Right lobe of liver (tissue), 6 donors: ENCODE measurements at regions of chr10 and their contacts with region 1.

Region 1: GRCh38 chr10:58064714-58065528 is 202.8 kb downstream of the IPMK start:
- DNase-seq: no peak
- ATAC-seq: peak; percentile 81 to 88 (median 86)
- H3K4me3 ChIP-seq: no peak overlapping the region
- H3K27ac ChIP-seq: no peak overlapping the region
- H3K4me1 ChIP-seq: no peaks in the 10 kb centered on the region
- H3K27me3 ChIP-seq: no peaks in the 10 kb centered on the region
- CTCF ChIP-seq: peak; percentile 63 to 88 (median 78)
- POLR2A ChIP-seq: no peak

Region 2: GRCh38 chr10:57341294-57341693 is 723.6 kb before region 1 on chr10:
- intact Hi-C with region 1: loop called in 1 of 2 experiments (anchors 10 kb)
- DNase-seq: no peak
- ATAC-seq: no peak
- H3K4me3 ChIP-seq: no peak overlapping the region
- H3K27ac ChIP-seq: no peak overlapping the region
- H3K4me1 ChIP-seq: no peaks in the 10 kb centered on the region
- H3K27me3 ChIP-seq: no peaks in the 10 kb centered on the region
- CTCF ChIP-seq: no peak
- POLR2A ChIP-seq: no peak

Region 3: GRCh38 chr10:57716886-57717285 is 348.0 kb before region 1 on chr10:
- intact Hi-C with region 1: loop called in 1 of 2 experiments (anchors 10 kb)
- DNase-seq: no peak
- ATAC-seq: peak; percentile 67 to 76 (median 68)
- H3K4me3 ChIP-seq: no peak overlapping the region
- H3K27ac ChIP-seq: no peak overlapping the region
- H3K4me1 ChIP-seq: no peaks in the 10 kb centered on the region
- H3K27me3 ChIP-seq: no peaks in the 10 kb centered on the region
- CTCF ChIP-seq: peak; percentile 47 to 65 (median 60)
- POLR2A ChIP-seq: no peak